ENCODE measurements at regions of chr1 and their contacts with region 1.

Region 1: DNA sequence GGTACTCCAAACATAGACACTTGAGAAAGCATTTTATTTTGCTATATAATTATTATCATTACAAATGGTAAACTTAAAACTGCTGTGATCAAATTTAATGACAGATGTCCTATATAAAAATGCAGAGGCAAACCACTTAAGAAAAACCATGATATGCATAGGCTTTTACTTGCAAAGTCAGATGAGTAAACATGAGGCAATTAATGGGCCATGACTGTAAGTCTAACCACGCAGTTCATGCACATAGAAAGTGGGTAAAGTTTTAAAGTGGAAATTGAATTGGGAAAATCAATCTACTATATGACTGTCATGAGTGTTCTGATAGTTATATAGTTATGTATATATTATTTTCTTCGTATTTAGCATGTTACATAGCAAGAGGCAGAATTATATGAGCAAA is 219.2 kb downstream of the PTPRC start:
- DNase-seq: no peak
- H3K4me3 ChIP-seq: no peak overlapping the region
- H3K27ac ChIP-seq: no peak overlapping the region
- H3K4me1 ChIP-seq: peaks cover 40% of the 10 kb centered on the region
- H3K27me3 ChIP-seq: no peaks in the 10 kb centered on the region
- CTCF ChIP-seq: no peak

Region 2: GRCh38 chr1:198845851-198846250 is 12.2 kb before region 1 on chr1:
- CTCF ChIA-PET with region 1: interaction called, 14 read pairs
- POLR2A ChIA-PET with region 1: no interaction called
- intact Hi-C with region 1: no loop called
- DNase-seq: no peak
- H3K4me3 ChIP-seq: no peak overlapping the region
- H3K27ac ChIP-seq: peak overlapping the region; percentile 31
- H3K4me1 ChIP-seq: peaks cover 26% of the 10 kb centered on the region
- H3K27me3 ChIP-seq: no peaks in the 10 kb centered on the region
- CTCF ChIP-seq: no peak

Region 3: DNA sequence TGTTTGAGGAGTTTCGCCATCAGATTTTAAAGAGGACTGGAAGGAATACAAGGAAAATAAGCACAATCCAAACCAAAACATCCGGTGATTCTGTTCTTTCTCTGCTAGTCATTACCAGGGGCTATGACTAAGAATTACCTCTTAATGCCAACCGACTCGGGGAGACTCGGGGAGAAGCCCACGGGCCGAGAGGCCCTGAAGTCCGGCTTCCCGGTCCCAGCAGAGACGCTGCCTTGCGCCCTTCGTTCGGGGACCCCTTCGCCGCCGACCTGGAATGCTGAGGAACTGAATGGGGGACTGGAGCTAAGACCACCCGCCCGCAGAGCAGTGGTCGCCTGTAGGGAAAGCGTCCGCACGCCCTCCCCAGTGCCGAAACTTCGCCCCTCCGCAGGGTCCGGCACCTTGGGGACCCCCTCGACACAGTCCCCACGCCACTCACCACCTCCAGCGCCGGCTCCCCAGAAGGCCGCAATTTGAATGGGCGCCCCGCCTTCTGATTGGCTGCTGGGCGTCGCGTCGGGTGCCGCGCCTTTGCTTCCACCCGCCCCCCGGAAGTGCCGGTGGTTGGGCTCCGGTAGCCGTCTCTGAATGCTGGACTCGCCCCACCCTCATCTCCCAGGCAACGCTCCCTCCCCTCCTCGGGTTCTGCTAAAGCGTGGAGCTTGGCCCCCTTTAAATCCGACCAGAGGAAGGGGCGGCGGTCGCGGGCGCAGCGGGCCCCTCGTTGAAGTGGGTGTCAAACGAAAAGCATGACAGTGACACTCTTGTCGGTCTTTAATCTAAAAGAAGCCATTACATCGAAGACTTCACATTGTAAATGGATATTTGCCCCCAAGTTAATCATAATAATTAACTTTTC is 1762.5 kb after region 1 on chr1 and contains the start of gene KIF14:
- CTCF ChIA-PET with region 1: no interaction called
- POLR2A ChIA-PET with region 1: no interaction called
- intact Hi-C with region 1: no loop called
- DNase-seq: peak; percentile 99
- H3K4me3 ChIP-seq: peak within 1 kb of the TSS; percentile 70
- H3K27ac ChIP-seq: peak within 1 kb of the TSS; percentile 79
- H3K4me1 ChIP-seq: peaks cover 3% of the 10 kb centered on the region
- H3K27me3 ChIP-seq: no peaks in the 10 kb centered on the region
- CTCF ChIP-seq: no peak
- total RNA-seq, gene KIF14: 37.6 and 39.7 TPM in 2 replicates